WTC11 (cell line): ENCODE measurements at regions of chr17 and their contacts with region 1.

Region 1: DNA sequence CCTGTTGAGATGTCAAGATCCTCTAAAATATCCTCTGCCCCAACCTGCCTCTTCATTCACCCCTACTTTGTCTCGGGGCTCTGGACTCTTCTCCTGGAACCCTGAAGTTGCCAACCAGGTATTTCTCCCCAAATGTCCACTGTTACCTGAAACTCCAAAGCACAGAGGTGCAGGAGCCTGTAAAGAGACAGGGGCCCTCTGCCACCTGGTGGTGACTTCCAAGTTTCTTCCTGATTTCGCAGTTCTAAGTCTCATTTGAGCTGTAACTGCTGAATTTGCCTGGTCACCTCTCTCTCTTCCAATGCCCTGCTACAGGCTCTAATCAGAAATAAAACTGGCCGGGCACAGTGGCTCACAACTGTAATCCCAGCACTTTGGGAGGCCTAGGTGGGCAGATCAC is 77.1 kb upstream of the RCVRN start:
- DNase-seq: peak; percentile 63
- ATAC-seq: peak; percentile 84
- H3K4me3 Mint-ChIP-seq: no peak overlapping the region
- H3K27ac Mint-ChIP-seq: no peak overlapping the region
- H3K4me1 Mint-ChIP-seq: peaks cover 3% of the 10 kb centered on the region
- H3K27me3 Mint-ChIP-seq: no peaks in the 10 kb centered on the region
- CTCF ChIP-seq: 0 out of 2 replicates have a peak, but pooled peaks have one; percentile 44

Region 2: DNA sequence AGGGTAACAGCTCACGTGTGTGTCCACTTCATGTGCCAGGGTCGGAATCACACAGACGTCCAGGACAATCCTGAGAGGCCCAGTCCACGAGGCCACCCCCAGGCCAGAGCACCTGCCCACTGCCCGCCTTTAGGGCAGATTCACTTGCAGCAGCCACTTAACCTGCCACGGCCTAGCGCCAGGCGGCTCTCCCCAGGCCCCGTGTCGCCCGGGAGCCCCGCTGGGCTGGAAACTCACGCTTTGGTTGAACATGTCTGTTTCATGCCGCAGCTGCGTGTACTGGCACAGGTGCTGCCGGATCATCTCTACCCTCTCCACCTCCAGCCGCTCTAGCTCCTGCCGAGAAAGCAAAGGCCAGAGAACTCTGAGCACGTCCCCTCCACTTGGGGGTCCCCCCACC is 64.4 kb before region 1 on chr17:
- CTCF ChIA-PET with region 1: interaction called, 35 read pairs
- POLR2A ChIA-PET with region 1: no interaction called
- DNase-seq: no peak
- ATAC-seq: no peak
- H3K4me3 Mint-ChIP-seq: no peak overlapping the region
- H3K27ac Mint-ChIP-seq: no peak overlapping the region
- H3K4me1 Mint-ChIP-seq: no peaks in the 10 kb centered on the region
- H3K27me3 Mint-ChIP-seq: no peaks in the 10 kb centered on the region
- CTCF ChIP-seq: no peak

Region 3: GRCh38 chr17:9971991-9972599 is 10.1 kb before region 1 on chr17:
- CTCF ChIA-PET with region 1: interaction called, 19 read pairs
- POLR2A ChIA-PET with region 1: no interaction called
- DNase-seq: no peak
- ATAC-seq: no peak
- H3K4me3 Mint-ChIP-seq: no peak overlapping the region
- H3K27ac Mint-ChIP-seq: no peak overlapping the region
- H3K4me1 Mint-ChIP-seq: peaks cover 11% of the 10 kb centered on the region
- H3K27me3 Mint-ChIP-seq: no peaks in the 10 kb centered on the region
- CTCF ChIP-seq: no peak

Region 4: GRCh38 chr17:10041916-10042588 is 59.9 kb after region 1 on chr17:
- CTCF ChIA-PET with region 1: no interaction called
- POLR2A ChIA-PET with region 1: no interaction called
- DNase-seq: no peak
- ATAC-seq: no peak
- H3K4me3 Mint-ChIP-seq: no peak overlapping the region
- H3K27ac Mint-ChIP-seq: no peak overlapping the region
- H3K4me1 Mint-ChIP-seq: peaks cover 3% of the 10 kb centered on the region
- H3K27me3 Mint-ChIP-seq: no peaks in the 10 kb centered on the region
- CTCF ChIP-seq: no peak